Heart right ventricle (tissue), 16 donors: ENCODE measurements at regions of chr6 and their contacts with region 1.

Region 1: GRCh38 chr6:45930420-45931040 is 85.1 kb downstream of the CLIC5 start:
- DNase-seq: peak; percentile 56 to 73
- ATAC-seq: peak; percentile 60 to 83 (median 80)
- H3K4me3 ChIP-seq: no peak overlapping the region
- H3K27ac ChIP-seq: peak overlapping the region in 6 of 10 donors; percentile 2 to 62 (median 45)
- H3K4me1 ChIP-seq: peaks cover 0 to 69% (median 21%) of the 10 kb centered on the region in 9 donors
- H3K27me3 ChIP-seq: no peaks in the 10 kb centered on the region
- CTCF ChIP-seq: peak; percentile 92 to 98 (median 97)

Region 2: GRCh38 chr6:46011241-46012085 is 80.9 kb after region 1 on chr6:
- intact Hi-C with region 1: loop called in 6 of 10 experiments (anchors 5 to 10 kb)
- DNase-seq: no peak
- ATAC-seq: peak in 6 of 8 donors; percentile 27 to 65 (median 46)
- H3K4me3 ChIP-seq: peak overlapping the region in 9 of 10 donors; percentile 6 to 91 (median 85)
- H3K27ac ChIP-seq: peak overlapping the region; percentile 55 to 99 (median 97)
- H3K4me1 ChIP-seq: peaks cover 3 to 83% (median 56%) of the 10 kb centered on the region in 9 donors
- H3K27me3 ChIP-seq: peaks cover 0 to 28% (median 0%) of the 10 kb centered on the region in 7 donors
- CTCF ChIP-seq: no peak

Region 3: DNA sequence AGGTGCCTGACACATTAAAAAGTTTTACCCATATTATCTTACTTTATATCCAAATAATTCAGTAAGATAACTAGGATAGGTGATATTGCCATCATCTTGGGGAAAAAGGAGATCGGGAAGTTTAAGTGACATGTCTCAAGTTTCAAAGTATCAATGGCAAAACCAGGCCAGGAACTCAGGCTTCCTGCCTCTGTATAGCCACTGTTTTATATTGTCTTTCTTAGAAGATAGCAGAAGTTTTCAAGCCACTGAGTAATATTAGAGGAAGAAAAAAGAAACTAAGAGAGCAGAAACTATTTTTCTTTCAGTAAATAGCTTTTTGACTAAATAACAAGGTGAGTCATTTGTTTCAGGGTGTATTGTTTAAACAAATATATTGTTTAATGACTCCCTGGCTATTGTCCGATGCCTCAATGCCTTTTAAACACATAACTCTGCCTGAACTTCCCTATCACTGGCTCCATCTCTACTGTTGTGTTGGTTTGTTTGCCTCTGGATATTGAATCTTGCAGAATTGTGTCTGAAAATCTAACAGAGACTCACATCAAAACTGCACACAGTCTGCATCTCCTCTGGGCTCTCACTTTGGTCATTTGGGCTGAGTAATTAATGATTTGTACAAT is 104.6 kb after region 1 on chr6:
- intact Hi-C with region 1: loop called in 1 of 10 experiments (anchors 5 kb)
- DNase-seq: no peak
- ATAC-seq: peak in 7 of 8 donors; percentile 28 to 72 (median 63)
- H3K4me3 ChIP-seq: no peak overlapping the region
- H3K27ac ChIP-seq: peak overlapping the region in 8 of 10 donors; percentile 8 to 67 (median 42)
- H3K4me1 ChIP-seq: peaks cover 0 to 61% (median 9%) of the 10 kb centered on the region in 9 donors
- H3K27me3 ChIP-seq: no peaks in the 10 kb centered on the region
- CTCF ChIP-seq: no peak

Region 4: DNA sequence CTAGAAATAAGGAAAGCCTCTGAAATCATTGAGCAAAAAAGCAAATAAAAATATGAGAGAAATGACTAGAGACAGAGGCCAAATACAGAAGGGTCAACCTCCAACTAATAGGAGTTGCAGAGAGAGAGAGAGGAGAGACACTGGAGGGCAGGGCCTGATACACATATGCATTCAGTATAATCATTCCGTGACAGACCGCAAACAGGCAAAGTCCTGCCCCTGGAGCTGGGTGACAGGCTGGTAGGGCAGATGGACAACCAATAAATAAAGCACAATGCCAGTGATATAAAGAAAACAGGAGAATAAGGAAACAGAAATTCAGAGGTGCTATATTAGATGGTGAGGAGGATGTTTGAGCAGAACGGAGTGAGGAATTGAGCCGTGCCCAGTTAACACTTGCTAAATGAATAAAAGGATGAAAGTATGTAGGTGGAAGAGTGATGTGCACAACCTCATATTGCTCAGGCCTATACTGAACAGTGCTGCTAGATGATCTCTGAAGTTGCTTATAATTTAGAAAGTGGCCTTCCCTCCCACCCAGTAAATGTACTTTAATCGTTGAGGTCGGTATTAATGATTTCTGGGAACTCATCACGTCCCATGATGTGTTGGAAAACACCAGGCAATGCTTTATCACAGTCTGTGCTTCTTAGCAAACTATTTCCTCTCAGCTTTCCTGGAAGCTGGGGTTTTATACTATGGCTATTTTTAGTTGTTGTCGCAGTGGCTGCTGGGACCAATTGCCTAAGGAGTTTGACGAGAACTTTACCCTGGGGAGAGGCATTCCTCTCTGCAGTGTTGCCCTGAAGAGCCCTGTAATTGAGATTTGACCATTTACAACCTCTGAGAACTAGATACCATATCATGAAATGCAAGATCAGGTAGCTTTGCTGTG is 122.8 kb after region 1 on chr6:
- intact Hi-C with region 1: loop called in 2 of 10 experiments (anchors 10 kb)
- DNase-seq: peak in 1 of 2 donors; percentile 67
- ATAC-seq: peak; percentile 70 to 95 (median 92)
- H3K4me3 ChIP-seq: no peak overlapping the region
- H3K27ac ChIP-seq: peak overlapping the region; percentile 59 to 94 (median 82)
- H3K4me1 ChIP-seq: peaks cover 3 to 43% (median 34%) of the 10 kb centered on the region in 9 donors
- H3K27me3 ChIP-seq: no peaks in the 10 kb centered on the region
- CTCF ChIP-seq: no peak

Region 5: GRCh38 chr6:46191961-46192360 is 261.4 kb after region 1 on chr6:
- intact Hi-C with region 1: loop called in 1 of 10 experiments (anchors 10 kb)
- DNase-seq: no peak
- ATAC-seq: no peak
- H3K4me3 ChIP-seq: no peak overlapping the region
- H3K27ac ChIP-seq: no peak overlapping the region
- H3K4me1 ChIP-seq: peaks cover 0 to 7% (median 0%) of the 10 kb centered on the region in 9 donors
- H3K27me3 ChIP-seq: no peaks in the 10 kb centered on the region
- CTCF ChIP-seq: no peak

Region 6: DNA sequence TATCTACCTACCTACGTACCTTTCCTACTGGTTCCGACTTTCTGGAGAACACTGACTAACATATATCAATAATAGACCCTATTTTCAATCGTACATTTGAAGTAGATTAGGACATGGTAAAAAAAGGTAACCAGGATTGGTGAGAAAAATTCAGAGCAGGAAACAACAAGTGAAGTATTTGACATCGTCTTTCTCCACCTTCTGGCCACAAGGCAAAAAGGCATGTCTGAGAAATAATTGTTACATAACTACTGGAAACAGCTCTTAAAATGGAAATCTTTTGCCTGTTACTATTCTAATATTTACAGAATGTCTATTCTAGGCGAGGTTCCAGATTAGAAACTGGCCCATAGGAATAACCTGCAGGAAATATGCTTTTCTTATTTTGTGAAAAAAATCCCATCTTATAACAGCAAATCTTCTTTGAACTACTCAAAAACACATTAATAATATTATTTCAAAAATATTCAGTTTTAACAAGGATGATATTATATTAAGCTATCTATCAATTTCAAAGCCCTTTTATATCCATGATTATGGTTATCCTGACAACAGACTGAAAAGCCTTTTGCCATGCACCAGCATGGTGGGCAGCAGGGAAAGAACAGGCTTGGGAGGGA is 479.9 kb after region 1 on chr6:
- intact Hi-C with region 1: loop called in 5 of 10 experiments (anchors 5 to 10 kb)
- DNase-seq: peak in 1 of 2 donors; percentile 37
- ATAC-seq: peak in 7 of 8 donors; percentile 19 to 53 (median 41)
- H3K4me3 ChIP-seq: no peak overlapping the region
- H3K27ac ChIP-seq: peak overlapping the region in 6 of 10 donors; percentile 24 to 62 (median 52)
- H3K4me1 ChIP-seq: peaks cover 2 to 84% (median 58%) of the 10 kb centered on the region in 9 donors
- H3K27me3 ChIP-seq: no peaks in the 10 kb centered on the region
- CTCF ChIP-seq: peak; percentile 47 to 88 (median 84)

Region 7: DNA sequence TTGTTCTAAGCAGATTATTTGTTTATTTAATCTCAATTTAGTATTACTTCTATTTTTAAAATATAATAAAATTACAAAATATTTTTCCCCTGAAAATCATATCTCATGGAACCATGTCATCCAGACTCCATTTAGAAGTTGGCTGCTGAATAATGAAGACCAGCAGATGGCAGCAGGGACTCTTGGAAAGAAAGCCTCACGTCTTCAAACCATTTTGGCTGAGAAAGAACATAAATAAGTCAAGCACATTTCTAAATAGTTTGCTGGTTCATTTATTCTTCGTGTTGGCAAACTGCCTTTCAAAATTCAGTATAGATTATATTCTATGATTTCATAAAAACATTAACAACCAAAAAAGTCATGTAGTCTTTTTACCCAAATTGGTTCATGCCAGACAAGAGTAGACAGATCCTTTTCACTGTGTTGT is 489.1 kb after region 1 on chr6:
- intact Hi-C with region 1: loop called in 4 of 10 experiments (anchors 5 to 10 kb)
- DNase-seq: peak in 1 of 2 donors; percentile 76
- ATAC-seq: peak in 5 of 8 donors; percentile 42 to 67 (median 58)
- H3K4me3 ChIP-seq: no peak overlapping the region
- H3K27ac ChIP-seq: peak overlapping the region in 4 of 10 donors; percentile 4 to 59 (median 30)
- H3K4me1 ChIP-seq: peaks cover 0 to 46% (median 15%) of the 10 kb centered on the region in 9 donors
- H3K27me3 ChIP-seq: no peaks in the 10 kb centered on the region
- CTCF ChIP-seq: peak; percentile 53 to 93 (median 81)